Activated B cell treated with CpG ODN at 0.5 μM for 24 hours (primary cell): ENCODE measurements at regions of chr3 and their contacts with region 1.

Region 1: GRCh38 chr3:146640955-146641867 is 36.1 kb upstream of the PLSCR5 start:
- DNase-seq: no peak
- ATAC-seq: no peak
- H3K4me3 Mint-ChIP-seq: no peak overlapping the region
- H3K27ac Mint-ChIP-seq: no peak overlapping the region
- H3K4me1 Mint-ChIP-seq: no peaks in the 10 kb centered on the region
- H3K27me3 Mint-ChIP-seq: no peaks in the 10 kb centered on the region
- CTCF ChIP-seq: no peak

Region 2: GRCh38 chr3:146065573-146066006 is 575.6 kb before region 1 on chr3:
- CTCF ChIA-PET with region 1: no interaction called
- POLR2A ChIA-PET with region 1: no interaction called
- intact Hi-C with region 1: loop called (anchors 1 kb)
- DNase-seq: no peak
- ATAC-seq: no peak
- H3K4me3 Mint-ChIP-seq: no peak overlapping the region
- H3K27ac Mint-ChIP-seq: no peak overlapping the region
- H3K4me1 Mint-ChIP-seq: no peaks in the 10 kb centered on the region
- H3K27me3 Mint-ChIP-seq: no peaks in the 10 kb centered on the region
- CTCF ChIP-seq: peak; percentile 91

Region 3: DNA sequence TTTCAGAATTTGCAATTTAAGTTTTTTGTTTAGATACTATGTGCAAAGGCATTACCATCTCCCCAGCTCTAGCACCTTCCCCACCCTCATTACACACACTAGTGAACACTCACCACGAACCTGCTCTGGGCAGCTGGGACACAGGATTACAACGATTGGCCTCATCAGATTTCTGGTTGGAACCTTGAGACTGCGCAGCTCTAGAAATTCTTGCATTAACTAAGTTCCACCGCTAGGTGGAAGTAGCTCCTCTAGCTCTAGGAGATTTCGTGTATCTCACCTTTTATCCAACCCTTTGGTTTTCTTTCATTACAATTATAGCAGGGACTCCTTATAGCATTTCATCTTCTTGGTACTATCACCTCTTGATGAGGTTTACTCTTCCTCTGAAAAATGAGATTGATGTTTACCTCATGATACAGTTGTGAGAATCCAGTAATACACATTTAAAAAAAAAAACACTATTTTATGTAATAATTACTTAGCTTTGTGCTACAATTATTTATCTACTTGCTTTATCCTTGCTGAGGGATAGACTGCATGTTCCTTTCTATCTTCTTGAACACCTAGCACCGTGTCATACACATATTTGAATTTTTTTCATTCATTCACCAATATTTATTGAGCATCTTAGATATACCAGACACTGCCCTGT is 451.6 kb before region 1 on chr3:
- CTCF ChIA-PET with region 1: interaction called, 3 read pairs
- POLR2A ChIA-PET with region 1: no interaction called
- intact Hi-C with region 1: loop called (anchors 1 kb)
- DNase-seq: no peak
- ATAC-seq: peak; percentile 56
- H3K4me3 Mint-ChIP-seq: no peak overlapping the region
- H3K27ac Mint-ChIP-seq: no peak overlapping the region
- H3K4me1 Mint-ChIP-seq: no peaks in the 10 kb centered on the region
- H3K27me3 Mint-ChIP-seq: peaks cover 2% of the 10 kb centered on the region
- CTCF ChIP-seq: peak; percentile 79

Region 4: DNA sequence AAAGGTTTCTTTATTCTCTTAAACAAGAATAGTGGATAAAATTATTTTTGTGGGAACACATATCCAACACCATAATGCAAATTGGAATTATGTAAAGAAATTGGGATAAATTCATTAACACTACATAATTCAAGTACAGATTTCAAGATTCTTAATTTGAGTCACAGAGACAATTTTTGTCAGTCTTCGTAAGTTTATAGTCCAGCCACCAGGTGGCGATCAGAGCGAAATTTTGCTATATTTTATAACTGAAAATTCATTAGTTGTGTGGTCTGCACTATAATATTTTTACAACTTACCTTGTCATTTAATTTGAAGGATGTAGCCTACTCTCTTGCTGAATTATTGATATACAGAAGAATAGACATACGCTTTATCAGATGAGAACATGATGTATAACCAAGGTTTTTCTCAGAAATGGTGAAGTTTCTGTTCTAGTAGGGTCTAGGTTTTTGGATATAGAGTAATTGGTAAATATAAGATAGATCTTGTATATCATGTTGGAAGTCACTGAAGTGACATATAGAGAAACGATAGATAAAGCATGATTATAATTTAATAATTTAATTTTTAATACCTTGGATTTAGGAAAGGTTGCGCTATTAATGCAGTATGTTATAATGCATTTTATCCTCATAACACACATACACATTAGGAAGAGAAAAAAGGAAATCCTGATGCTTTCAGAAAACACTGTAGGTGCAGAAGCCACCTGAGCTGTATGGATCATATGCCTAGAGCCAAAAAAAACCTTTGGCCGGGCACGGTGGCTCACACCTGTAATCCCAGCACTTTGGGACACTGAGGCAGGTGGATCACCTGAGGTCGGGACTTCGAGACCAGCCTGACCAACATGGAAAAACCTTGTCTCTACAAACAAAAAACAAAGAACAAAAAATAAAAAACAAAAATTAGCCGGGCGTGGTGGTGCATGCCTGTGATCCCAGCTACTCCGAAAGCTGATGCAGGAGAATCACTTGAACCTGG is 422.0 kb before region 1 on chr3:
- CTCF ChIA-PET with region 1: no interaction called
- POLR2A ChIA-PET with region 1: no interaction called
- intact Hi-C with region 1: loop called (anchors 1 kb)
- DNase-seq: no peak
- ATAC-seq: no peak
- H3K4me3 Mint-ChIP-seq: no peak overlapping the region
- H3K27ac Mint-ChIP-seq: no peak overlapping the region
- H3K4me1 Mint-ChIP-seq: no peaks in the 10 kb centered on the region
- H3K27me3 Mint-ChIP-seq: peaks cover 4% of the 10 kb centered on the region
- CTCF ChIP-seq: peak; percentile 80

Region 5: GRCh38 chr3:146589899-146590508 is 51.2 kb before region 1 on chr3:
- CTCF ChIA-PET with region 1: interaction called, 6 read pairs
- POLR2A ChIA-PET with region 1: no interaction called
- intact Hi-C with region 1: loop called (anchors 1 kb)
- DNase-seq: no peak
- ATAC-seq: no peak
- H3K4me3 Mint-ChIP-seq: no peak overlapping the region
- H3K27ac Mint-ChIP-seq: no peak overlapping the region
- H3K4me1 Mint-ChIP-seq: no peaks in the 10 kb centered on the region
- H3K27me3 Mint-ChIP-seq: peaks cover 5% of the 10 kb centered on the region
- CTCF ChIP-seq: no peak

Region 6: DNA sequence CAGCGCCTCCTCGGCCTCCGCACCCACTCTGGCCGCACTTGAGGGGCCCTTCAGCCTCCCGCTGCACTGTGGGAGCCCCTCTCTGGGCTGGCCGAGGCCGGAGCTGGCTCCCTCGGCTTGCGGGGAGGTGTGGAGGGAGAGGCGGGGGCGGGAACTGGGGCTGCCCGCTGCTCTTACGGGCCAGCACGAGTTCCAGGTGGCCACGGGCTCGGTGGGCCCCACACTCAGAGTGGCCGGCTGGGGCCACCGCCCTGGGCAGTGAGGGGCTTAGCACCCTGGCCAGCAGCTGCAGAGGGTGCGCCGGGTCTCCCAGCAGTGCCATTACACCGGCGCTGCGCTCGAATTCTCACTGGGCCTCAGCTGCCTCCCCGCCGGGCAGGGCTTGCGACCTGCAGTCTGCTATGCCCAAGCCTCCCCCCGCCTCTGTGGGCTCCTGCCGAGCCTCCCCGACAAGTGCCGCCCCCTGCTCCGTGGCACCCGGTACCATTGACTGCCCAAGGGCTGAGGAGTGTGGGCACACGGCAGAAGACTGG is 131.1 kb after region 1 on chr3:
- CTCF ChIA-PET with region 1: no interaction called
- POLR2A ChIA-PET with region 1: no interaction called
- intact Hi-C with region 1: no loop called
- DNase-seq: no peak
- ATAC-seq: no peak
- H3K4me3 Mint-ChIP-seq: no peak overlapping the region
- H3K27ac Mint-ChIP-seq: no peak overlapping the region
- H3K4me1 Mint-ChIP-seq: no peaks in the 10 kb centered on the region
- H3K27me3 Mint-ChIP-seq: no peaks in the 10 kb centered on the region
- CTCF ChIP-seq: no peak

Region 7: GRCh38 chr3:146783446-146783845 is 142.2 kb after region 1 on chr3:
- CTCF ChIA-PET with region 1: no interaction called
- POLR2A ChIA-PET with region 1: no interaction called
- intact Hi-C with region 1: no loop called
- DNase-seq: no peak
- ATAC-seq: no peak
- H3K4me3 Mint-ChIP-seq: no peak overlapping the region
- H3K27ac Mint-ChIP-seq: no peak overlapping the region
- H3K4me1 Mint-ChIP-seq: no peaks in the 10 kb centered on the region
- H3K27me3 Mint-ChIP-seq: no peaks in the 10 kb centered on the region
- CTCF ChIP-seq: no peak